GM13976 (cell line): ENCODE measurements at regions of chr6 and their contacts with region 1.

Region 1: DNA sequence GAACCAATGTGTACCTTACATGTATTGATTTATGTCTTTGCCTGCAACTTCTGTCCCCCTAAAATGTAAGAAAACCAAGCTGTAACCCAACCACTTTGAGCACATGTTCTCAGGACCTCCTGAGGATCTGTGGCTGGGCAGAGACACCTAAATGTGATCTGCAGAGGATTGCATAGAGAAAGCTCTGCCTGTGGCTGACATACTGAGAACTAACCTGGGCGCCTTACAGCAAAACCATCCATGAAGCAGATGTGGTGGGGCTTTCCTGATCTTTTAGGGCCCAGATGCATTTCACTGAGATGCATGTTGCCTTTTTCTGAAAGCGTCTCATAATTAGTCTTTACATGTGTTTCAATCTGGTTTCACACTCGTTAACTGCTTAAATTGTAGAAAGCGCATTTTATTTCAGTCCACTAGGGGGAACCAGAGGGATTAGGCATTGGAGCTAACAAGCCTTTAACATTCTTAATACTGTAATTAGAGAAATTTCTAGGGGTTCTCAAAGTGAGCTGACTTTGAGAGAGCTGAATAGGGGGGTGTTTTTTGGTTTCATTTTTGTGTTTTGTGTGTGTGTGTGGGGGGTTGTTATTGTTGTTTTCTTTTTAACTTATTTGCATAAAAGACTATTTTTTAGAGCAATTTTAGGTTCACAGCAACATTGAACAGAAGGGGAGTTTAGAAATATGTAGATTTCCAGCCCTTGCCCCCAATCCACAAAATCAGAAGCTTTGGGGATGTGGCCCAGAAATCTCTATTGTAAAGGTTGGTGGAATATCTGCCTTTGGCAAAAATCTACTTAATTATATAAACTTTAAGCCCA is 50.9 kb upstream of the FAM184A start:
- DNase-seq: peak; percentile 61
- CTCF ChIP-seq: peak; percentile 64

Region 2: GRCh38 chr6:119742188-119742803 is 612.9 kb after region 1 on chr6:
- in situ Hi-C with region 1: loop called (anchors 25 kb)
- DNase-seq: peak; percentile 15
- CTCF ChIP-seq: peak; percentile 87

Region 3: DNA sequence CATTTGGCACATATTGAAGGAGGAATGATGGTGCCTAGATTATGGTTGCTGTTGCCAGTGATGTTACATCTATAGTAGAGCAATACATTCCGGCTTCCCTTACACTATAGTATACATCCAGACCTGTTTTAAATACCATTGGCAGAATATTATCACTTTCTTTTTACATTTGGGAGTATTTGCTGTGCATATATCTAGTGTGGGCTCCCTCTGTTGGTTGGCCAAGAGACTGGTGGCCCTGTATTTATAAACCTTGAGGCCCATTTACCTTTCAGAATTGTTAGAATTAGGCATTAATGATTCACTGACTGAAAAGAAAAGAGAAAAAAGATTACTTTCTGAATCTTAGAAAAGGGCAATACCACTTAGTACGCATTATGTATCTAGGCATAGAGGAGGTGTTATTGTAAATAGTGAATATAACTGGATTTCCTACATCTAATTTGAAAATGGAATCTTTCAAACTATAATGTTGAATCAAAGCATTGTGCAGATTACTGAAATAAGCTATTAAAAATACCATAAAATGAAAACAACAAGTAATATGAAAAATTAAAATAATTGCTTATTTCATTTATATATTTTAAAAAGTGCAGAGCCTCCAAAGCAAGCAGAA is 849.0 kb after region 1 on chr6:
- in situ Hi-C with region 1: loop called (anchors 25 kb)
- DNase-seq: peak; percentile 13
- CTCF ChIP-seq: peak; percentile 33